ENCODE measurements at regions of chr17 and their contacts with region 1.

Region 1: GRCh38 chr17:54848368-54848987 is 52.2 kb upstream of the TOM1L1 start:
- DNase-seq: no peak
- H3K4me3 ChIP-seq: no peak overlapping the region
- H3K27ac ChIP-seq: no peak overlapping the region
- H3K4me1 ChIP-seq: no peaks in the 10 kb centered on the region
- H3K27me3 ChIP-seq: no peaks in the 10 kb centered on the region
- CTCF ChIP-seq: no peak
- EP300 ChIP-seq: no peak
- POLR2A ChIP-seq: no peak

Region 2: DNA sequence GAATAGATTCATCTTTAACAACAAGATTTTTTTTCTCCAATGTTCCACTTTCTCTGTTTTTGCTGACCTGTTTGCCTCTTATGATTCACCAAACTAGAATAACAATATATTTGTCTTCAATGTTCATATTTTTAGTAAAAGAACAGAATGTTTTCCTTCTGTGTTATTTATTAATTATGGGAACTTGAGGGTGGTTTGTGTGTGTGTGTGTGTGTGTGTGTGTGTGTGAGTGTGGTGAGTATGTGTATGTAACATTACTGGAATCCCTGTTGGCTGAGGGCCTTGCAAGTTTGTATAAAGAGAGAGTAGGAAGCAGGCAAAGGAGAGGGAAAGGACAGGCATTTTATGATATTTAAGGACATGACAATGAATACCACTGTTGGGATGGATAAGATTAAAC is 133.9 kb after region 1 on chr17:
- intact Hi-C with region 1: no loop called
- DNase-seq: peak in 3 of 5 donors; percentile 50 to 79 (median 55)
- H3K4me3 ChIP-seq: no peak overlapping the region
- H3K27ac ChIP-seq: no peak overlapping the region
- H3K4me1 ChIP-seq: peaks cover 2% of the 10 kb centered on the region
- H3K27me3 ChIP-seq: no peaks in the 10 kb centered on the region
- CTCF ChIP-seq: no peak
- EP300 ChIP-seq: peak; percentile 21
- POLR2A ChIP-seq: peak; percentile 19

Region 3: GRCh38 chr17:55830699-55831445 is 982.4 kb after region 1 on chr17:
- intact Hi-C with region 1: loop called in 1 of 4 experiments (anchors 5 kb)
- DNase-seq: no peak
- H3K4me3 ChIP-seq: no peak overlapping the region
- H3K27ac ChIP-seq: no peak overlapping the region
- H3K4me1 ChIP-seq: no peaks in the 10 kb centered on the region
- H3K27me3 ChIP-seq: no peaks in the 10 kb centered on the region
- CTCF ChIP-seq: no peak
- EP300 ChIP-seq: no peak
- POLR2A ChIP-seq: no peak

Measured in ovary (tissue), 10 donors.